Transverse colon (tissue), 4 donors: ENCODE measurements at regions of chr2 and their contacts with region 1.

Region 1: GRCh38 chr2:5507367-5507766 is 184.8 kb upstream of the SOX11 start:
- DNase-seq: no peak
- H3K4me3 ChIP-seq: no peak overlapping the region
- H3K27ac ChIP-seq: no peak overlapping the region
- H3K4me1 ChIP-seq: no peaks in the 10 kb centered on the region
- H3K27me3 ChIP-seq: no peaks in the 10 kb centered on the region
- CTCF ChIP-seq: no peak
- EP300 ChIP-seq: no peak
- POLR2A ChIP-seq: no peak

Region 2: GRCh38 chr2:5215989-5216607 is 291.3 kb before region 1 on chr2:
- in situ Hi-C with region 1: no loop called
- intact Hi-C with region 1: no loop called
- DNase-seq: no peak
- H3K4me3 ChIP-seq: no peak overlapping the region
- H3K27ac ChIP-seq: no peak overlapping the region
- H3K4me1 ChIP-seq: no peaks in the 10 kb centered on the region
- H3K27me3 ChIP-seq: no peaks in the 10 kb centered on the region
- CTCF ChIP-seq: no peak
- EP300 ChIP-seq: no peak
- POLR2A ChIP-seq: no peak

Region 3: DNA sequence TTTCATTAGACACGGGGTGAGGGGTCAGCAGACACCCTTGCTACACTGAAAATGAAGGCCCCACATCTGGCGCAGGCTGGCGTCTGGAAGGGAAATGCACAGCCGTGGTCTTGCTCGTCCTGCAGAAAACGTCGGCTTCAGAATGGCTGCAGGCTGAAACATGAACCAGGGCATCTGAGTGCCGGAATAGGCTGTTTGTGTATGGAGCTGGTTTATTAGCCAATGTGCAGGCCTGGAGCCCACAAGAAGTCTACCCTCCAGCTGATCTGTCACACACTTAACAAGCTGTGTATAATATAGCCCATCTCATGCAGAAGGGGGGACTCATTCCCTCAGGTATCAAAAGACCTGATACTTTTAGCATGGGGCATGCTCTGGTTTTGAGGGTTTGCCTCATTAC is 31.4 kb after region 1 on chr2:
- in situ Hi-C with region 1: no loop called
- intact Hi-C with region 1: loop called (anchors 2 kb)
- DNase-seq: no peak
- H3K4me3 ChIP-seq: no peak overlapping the region
- H3K27ac ChIP-seq: peak overlapping the region in 2 of 4 donors; percentile 46 to 50
- H3K4me1 ChIP-seq: no peaks in the 10 kb centered on the region
- H3K27me3 ChIP-seq: no peaks in the 10 kb centered on the region
- CTCF ChIP-seq: no peak
- EP300 ChIP-seq: no peak
- POLR2A ChIP-seq: no peak